AG04449 (cell line): ENCODE measurements at regions of chr6 and their contacts with region 1.

Region 1: GRCh38 chr6:131949909-131950766 is 1.0 kb downstream of the CCN2 start:
- DNase-seq: peak; percentile 79
- H3K4me3 ChIP-seq: peak overlapping the region; percentile 97
- CTCF ChIP-seq: peak; percentile 51

Region 2: GRCh38 chr6:131877999-131878789 is 71.9 kb before region 1 on chr6:
- CTCF ChIA-PET with region 1: no interaction called
- POLR2A ChIA-PET with region 1: no interaction called
- DNase-seq: no peak
- H3K4me3 ChIP-seq: no peak overlapping the region
- CTCF ChIP-seq: no peak

Region 3: GRCh38 chr6:131960371-131961133 is 10.4 kb after region 1 on chr6:
- CTCF ChIA-PET with region 1: interaction called, 3 read pairs
- POLR2A ChIA-PET with region 1: interaction called, 18 read pairs
- DNase-seq: no peak
- H3K4me3 ChIP-seq: no peak overlapping the region
- CTCF ChIP-seq: no peak

Region 4: DNA sequence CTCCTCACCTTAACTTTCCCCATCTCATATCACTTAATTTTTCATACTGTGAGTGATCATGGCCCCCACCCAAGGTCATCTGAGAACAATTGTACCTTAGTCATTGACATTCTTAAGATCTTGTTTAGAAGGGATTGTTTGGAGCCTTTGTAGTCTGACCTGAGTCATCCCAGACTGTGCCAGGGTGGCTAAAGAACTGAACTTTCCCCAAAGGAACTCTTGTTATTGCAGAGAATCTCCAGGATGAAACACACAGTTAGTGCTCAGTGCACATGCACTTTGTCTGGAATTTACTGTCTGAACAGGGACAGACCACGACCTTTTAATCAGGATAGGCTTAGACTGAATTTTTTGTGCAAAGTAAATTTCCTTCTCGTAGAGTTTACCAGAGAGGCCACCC is 113.6 kb after region 1 on chr6:
- CTCF ChIA-PET with region 1: no interaction called
- POLR2A ChIA-PET with region 1: interaction called, 43 read pairs
- DNase-seq: no peak
- H3K4me3 ChIP-seq: no peak overlapping the region
- CTCF ChIP-seq: no peak

Region 5: GRCh38 chr6:132122871-132123270 is 172.7 kb after region 1 on chr6:
- CTCF ChIA-PET with region 1: no interaction called
- POLR2A ChIA-PET with region 1: interaction called, 13 read pairs
- DNase-seq: peak; percentile 81
- H3K4me3 ChIP-seq: no peak overlapping the region
- CTCF ChIP-seq: no peak

Region 6: DNA sequence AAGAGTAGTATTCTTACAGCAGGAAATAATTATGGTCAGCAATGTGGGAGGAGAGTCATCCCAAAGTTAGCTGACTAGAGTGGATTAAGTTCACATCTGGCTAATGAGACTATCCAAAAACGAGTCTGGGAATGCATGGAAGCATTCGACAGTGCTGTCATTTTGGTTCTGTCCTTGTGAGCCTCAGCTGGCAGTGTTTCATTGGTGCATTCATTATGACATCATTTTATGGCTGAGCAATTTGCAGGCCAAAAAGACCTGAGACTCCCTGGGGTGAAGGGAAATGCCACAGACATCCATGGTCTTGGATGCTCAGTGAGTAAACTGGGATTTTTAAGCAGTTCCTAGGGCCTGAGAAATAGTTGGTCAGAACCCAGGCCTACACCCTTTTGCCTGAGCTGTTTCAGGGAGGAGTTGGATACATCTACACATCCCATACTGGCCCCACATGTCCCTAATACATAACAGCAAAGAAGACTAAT is 197.4 kb after region 1 on chr6:
- CTCF ChIA-PET with region 1: interaction called, 3 read pairs
- POLR2A ChIA-PET with region 1: interaction called, 105 read pairs
- DNase-seq: peak; percentile 99
- H3K4me3 ChIP-seq: no peak overlapping the region
- CTCF ChIP-seq: no peak

Region 7: DNA sequence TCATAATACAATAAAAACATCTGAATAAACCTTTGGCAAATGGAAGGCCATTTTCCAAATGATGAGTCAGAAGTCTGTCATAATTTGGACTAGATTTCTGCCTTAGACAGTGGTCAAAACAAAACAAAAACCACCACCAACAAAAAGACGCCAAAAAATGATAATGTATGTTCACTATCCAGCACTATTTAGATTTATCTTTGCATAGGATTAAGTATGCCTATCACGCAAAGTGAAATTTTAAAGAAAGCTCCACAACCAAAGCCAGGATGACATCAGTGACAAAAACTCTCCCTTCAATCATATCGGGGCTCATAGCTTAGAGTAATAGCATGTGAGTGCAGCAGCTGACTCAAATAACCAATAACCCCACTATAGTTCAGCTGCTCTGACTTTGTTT is 249.2 kb after region 1 on chr6:
- CTCF ChIA-PET with region 1: interaction called, 3 read pairs
- POLR2A ChIA-PET with region 1: interaction called, 21 read pairs
- DNase-seq: no peak
- H3K4me3 ChIP-seq: no peak overlapping the region
- CTCF ChIP-seq: no peak